Stomach (tissue), 19 donors: ENCODE measurements at regions of chr12 and their contacts with region 1.

Region 1: DNA sequence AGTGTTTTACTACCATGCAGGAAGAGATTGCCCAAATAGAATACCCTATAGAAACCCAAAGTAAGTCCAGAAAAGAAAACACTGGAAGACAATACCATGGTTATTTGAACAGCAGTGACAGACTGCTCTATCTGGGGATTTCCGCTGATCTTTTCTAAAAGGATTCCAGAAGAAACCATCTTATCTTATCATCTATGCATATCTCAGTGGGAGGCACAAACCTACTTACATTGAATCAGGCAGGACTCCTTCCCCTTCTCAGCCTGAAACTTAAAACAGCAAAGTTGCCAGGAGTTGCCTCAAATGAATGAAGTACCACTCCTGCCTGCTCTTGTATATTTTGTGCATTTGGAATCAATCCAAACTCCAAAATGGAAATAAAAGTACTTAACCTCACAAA is 56.7 kb upstream of the NR2C1 start:
- DNase-seq: no peak
- H3K4me3 ChIP-seq: no peak overlapping the region
- H3K27ac ChIP-seq: no peak overlapping the region
- H3K4me1 ChIP-seq: peaks cover 0 to 6% (median 0%) of the 10 kb centered on the region in 4 donors
- H3K27me3 ChIP-seq: no peaks in the 10 kb centered on the region
- CTCF ChIP-seq: no peak
- EP300 ChIP-seq: no peak
- POLR2A ChIP-seq: no peak

Region 2: GRCh38 chr12:95198914-95199313 is 68.8 kb after region 1 on chr12:
- intact Hi-C with region 1: loop called (anchors 10 kb)
- DNase-seq: no peak
- H3K4me3 ChIP-seq: no peak overlapping the region
- H3K27ac ChIP-seq: no peak overlapping the region
- H3K4me1 ChIP-seq: peaks cover 0 to 35% (median 16%) of the 10 kb centered on the region in 4 donors
- H3K27me3 ChIP-seq: no peaks in the 10 kb centered on the region
- CTCF ChIP-seq: no peak
- EP300 ChIP-seq: no peak
- POLR2A ChIP-seq: no peak